HepG2 (cell line): ENCODE measurements at regions of chr1 and their contacts with region 1.

Region 1: GRCh38 chr1:93061895-93062792 is 16.9 kb upstream of the MTF2 start:
- DNase-seq: peak; percentile 54
- ATAC-seq: peak; percentile 88
- H3K4me3 ChIP-seq: no peak overlapping the region
- H3K27ac ChIP-seq: no peak overlapping the region
- H3K4me1 ChIP-seq: no peaks in the 10 kb centered on the region
- H3K27me3 ChIP-seq: no peaks in the 10 kb centered on the region; a peak in 1 of 5 replicates
- CTCF ChIP-seq: peak; percentile 82
- EP300 ChIP-seq: no peak
- POLR2A ChIP-seq: no peak
- RAD21 ChIP-seq: peak; percentile 72

Region 2: GRCh38 chr1:92987462-92987861 is 74.7 kb before region 1 on chr1:
- CTCF ChIA-PET with region 1: no interaction called
- POLR2A ChIA-PET with region 1: no interaction called
- in situ Hi-C with region 1: no loop called
- intact Hi-C with region 1: no loop called
- DNase-seq: no peak
- ATAC-seq: no peak
- H3K4me3 ChIP-seq: no peak overlapping the region
- H3K27ac ChIP-seq: no peak overlapping the region
- H3K4me1 ChIP-seq: peaks cover 33% of the 10 kb centered on the region
- H3K27me3 ChIP-seq: no peaks in the 10 kb centered on the region; a peak in 1 of 5 replicates
- CTCF ChIP-seq: no peak
- EP300 ChIP-seq: no peak
- POLR2A ChIP-seq: no peak
- RAD21 ChIP-seq: no peak

Region 3: DNA sequence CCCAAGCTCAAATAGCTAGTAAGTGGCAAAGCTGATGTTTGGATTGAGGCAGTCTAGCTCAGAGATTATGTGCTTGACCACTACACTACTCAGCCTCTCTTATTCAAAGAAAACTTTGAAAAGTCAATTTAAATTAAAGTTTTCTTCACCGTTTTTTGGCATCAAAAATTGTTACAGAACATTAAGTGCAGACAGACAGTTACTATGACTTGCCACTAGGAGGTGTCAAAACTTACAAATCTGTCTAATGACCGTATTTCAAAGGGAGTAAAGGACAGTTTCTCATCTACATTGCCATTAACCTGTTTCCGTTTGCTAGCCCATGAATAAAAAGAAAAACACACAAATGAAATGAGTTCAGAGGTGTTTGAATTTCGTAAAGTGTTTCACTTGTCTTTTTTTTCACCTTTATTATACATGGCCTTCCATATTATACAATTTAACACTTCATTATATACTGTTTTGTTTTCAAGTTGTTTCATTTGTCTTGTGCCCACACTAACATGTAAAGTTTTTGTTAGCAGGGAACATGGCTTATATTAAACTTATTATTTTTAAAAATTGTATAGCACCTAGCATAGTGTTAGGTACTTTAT is 40.5 kb before region 1 on chr1:
- CTCF ChIA-PET with region 1: interaction called, 45 read pairs
- POLR2A ChIA-PET with region 1: no interaction called
- in situ Hi-C with region 1: loop called (anchors 5 kb)
- intact Hi-C with region 1: loop called (anchors 1 kb)
- DNase-seq: peak; percentile 42
- ATAC-seq: peak; percentile 58; the same call in 2 of the 3 replicates
- H3K4me3 ChIP-seq: no peak overlapping the region
- H3K27ac ChIP-seq: no peak overlapping the region
- H3K4me1 ChIP-seq: peaks cover under 1% of the 10 kb centered on the region; the same call in 1 of the 2 replicates
- H3K27me3 ChIP-seq: no peaks in the 10 kb centered on the region; a peak in 1 of 5 replicates
- CTCF ChIP-seq: peak; percentile 74
- EP300 ChIP-seq: no peak
- POLR2A ChIP-seq: no peak
- RAD21 ChIP-seq: peak; percentile 76